ENCODE measurements at regions of chr11 and their contacts with region 1.

Region 1: DNA sequence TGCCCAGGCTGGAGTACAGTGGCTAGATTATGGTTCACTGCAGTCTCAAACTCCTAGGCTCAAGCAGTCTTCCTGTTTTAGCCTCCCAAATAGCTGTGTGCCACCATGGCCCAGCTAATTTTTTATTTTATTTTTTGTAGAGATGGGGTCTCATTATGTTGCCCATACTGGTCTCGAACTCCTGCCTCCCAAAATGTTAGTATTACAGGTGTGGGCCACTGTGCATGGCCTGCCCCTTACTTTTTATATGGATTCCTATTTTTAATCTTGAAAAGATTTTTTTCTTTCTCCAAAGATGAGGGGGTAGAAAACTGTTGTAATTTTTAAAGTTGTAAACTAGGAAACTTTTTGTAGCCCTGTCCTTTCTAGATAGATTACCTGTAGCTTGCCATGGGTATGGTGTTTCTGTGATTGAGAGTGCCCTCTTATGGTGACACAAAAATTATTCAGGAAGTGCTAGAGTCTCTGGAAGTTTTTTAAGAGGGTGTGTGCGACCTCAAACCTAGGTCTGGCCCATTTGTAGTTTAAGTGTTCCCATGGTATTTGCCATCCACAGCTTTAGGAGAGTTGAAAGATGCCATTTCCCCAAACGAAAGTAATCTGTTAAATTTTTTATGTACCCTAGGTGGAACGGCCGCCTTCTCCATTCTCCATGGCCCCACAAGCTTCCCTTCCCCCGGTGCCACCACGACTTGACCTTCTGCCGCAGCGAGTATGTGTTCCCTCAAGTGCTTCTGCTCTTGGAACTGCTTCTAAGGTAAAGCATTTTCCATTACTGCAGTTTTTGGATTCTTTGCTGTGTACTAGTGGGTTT is 32.4 kb downstream of the MCAM start:
- DNase-seq: no peak
- H3K4me3 Mint-ChIP-seq: no peak overlapping the region
- H3K27ac Mint-ChIP-seq: peak overlapping the region; percentile 30
- H3K4me1 Mint-ChIP-seq: peaks cover 25% of the 10 kb centered on the region
- H3K27me3 Mint-ChIP-seq: no peaks in the 10 kb centered on the region

Region 2: GRCh38 chr11:119196833-119197483 is 87.6 kb before region 1 on chr11:
- intact Hi-C with region 1: loop called (anchors 2 kb)
- DNase-seq: peak; percentile 52
- H3K4me3 Mint-ChIP-seq: no peak overlapping the region
- H3K27ac Mint-ChIP-seq: no peak overlapping the region
- H3K4me1 Mint-ChIP-seq: peaks cover 2% of the 10 kb centered on the region
- H3K27me3 Mint-ChIP-seq: peaks cover 10% of the 10 kb centered on the region

Region 3: GRCh38 chr11:119273721-119274120 is 10.8 kb before region 1 on chr11:
- intact Hi-C with region 1: no loop called
- DNase-seq: no peak
- H3K4me3 Mint-ChIP-seq: no peak overlapping the region
- H3K27ac Mint-ChIP-seq: no peak overlapping the region
- H3K4me1 Mint-ChIP-seq: peaks cover 8% of the 10 kb centered on the region
- H3K27me3 Mint-ChIP-seq: no peaks in the 10 kb centered on the region

Region 4: DNA sequence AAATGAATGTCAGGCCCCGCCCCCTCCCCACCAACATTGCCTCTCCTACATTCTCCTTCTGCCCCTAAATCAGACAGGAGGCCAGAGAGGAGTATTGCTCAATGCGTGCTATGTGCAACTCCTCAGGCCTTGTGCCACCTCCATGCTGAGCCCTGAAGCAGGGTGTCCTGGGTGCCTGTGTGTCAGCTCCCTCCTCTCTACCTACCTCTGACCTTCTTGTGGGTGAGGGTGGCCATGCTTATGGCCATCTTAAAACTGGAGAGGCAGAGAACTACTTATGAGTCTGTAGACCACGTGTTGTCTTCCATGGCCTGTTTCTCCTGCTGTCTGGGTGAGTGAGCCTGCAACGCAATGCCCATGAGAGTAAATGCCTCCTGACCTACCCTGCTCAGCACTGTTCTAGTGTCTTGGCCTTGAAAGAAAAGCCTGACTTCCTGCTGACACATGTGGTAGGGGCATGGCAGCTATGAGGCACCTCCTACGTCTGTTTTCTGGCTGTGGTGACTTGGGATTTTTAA is 21.9 kb after region 1 on chr11:
- intact Hi-C with region 1: loop called (anchors 2 kb)
- DNase-seq: no peak
- H3K4me3 Mint-ChIP-seq: peak overlapping the region; percentile 31
- H3K27ac Mint-ChIP-seq: peak overlapping the region; percentile 92
- H3K4me1 Mint-ChIP-seq: peaks cover 24% of the 10 kb centered on the region
- H3K27me3 Mint-ChIP-seq: no peaks in the 10 kb centered on the region